AG04449 (cell line): ENCODE measurements at regions of chr12 and their contacts with region 1.

Region 1: GRCh38 chr12:94983321-94983720 is 20.2 kb downstream of the NDUFA12 start:
- DNase-seq: no peak
- H3K4me3 ChIP-seq: no peak overlapping the region
- CTCF ChIP-seq: no peak

Region 2: GRCh38 chr12:94805749-94806529 is 177.4 kb before region 1 on chr12:
- CTCF ChIA-PET with region 1: no interaction called
- POLR2A ChIA-PET with region 1: no interaction called
- DNase-seq: peak; percentile 33
- H3K4me3 ChIP-seq: no peak overlapping the region
- CTCF ChIP-seq: no peak

Region 3: GRCh38 chr12:94948232-94948810 is 35.0 kb before region 1 on chr12:
- CTCF ChIA-PET with region 1: no interaction called
- POLR2A ChIA-PET with region 1: no interaction called
- DNase-seq: no peak
- H3K4me3 ChIP-seq: no peak overlapping the region
- CTCF ChIP-seq: no peak

Region 4: GRCh38 chr12:94973221-94973620 is 10.1 kb before region 1 on chr12:
- CTCF ChIA-PET with region 1: interaction called, 3 read pairs
- POLR2A ChIA-PET with region 1: interaction called, 32 read pairs
- DNase-seq: peak; percentile 68
- H3K4me3 ChIP-seq: no peak overlapping the region; the same call in 1 of the 2 replicates
- CTCF ChIP-seq: no peak

Region 5: DNA sequence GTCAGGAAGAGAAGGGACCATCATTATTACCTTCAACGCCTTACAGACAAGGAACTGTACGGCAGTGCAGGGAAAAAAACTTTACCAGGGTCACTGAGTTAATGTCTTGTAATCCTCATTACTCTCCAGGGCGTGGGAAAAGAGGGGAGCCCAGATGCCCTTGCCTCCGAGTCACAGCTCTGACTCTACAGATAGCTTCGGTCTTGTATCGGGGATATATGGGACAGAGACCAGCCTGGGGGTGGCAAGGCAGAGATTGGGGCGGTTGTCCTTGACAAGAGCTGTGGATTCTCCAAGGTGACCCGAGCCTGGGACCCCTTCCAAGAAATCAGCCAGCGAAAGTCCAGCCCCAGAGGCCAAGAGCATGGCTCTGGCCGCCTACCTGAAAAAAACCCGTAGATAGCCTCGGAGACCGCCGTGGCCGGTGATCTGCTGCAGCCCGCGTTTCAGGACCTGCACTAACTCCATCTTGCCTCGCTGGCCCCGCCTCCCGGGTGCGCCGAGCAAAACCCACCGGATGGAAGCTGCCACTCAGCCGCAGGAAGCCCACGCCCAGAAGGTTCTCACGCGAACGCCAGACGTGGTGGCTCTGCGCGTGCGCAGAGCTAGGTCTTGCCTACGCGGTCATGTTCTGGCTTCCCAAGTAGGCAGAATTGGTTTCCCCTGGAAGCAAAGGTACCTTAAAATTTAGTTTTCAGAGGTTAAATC is 20.0 kb after region 1 on chr12 and contains the start of gene NDUFA12:
- CTCF ChIA-PET with region 1: interaction called, 3 read pairs
- POLR2A ChIA-PET with region 1: interaction called, 17 read pairs
- DNase-seq: peak; percentile 70
- H3K4me3 ChIP-seq: peak within 1 kb of the TSS; percentile 92
- CTCF ChIP-seq: peak; percentile 15

Region 6: DNA sequence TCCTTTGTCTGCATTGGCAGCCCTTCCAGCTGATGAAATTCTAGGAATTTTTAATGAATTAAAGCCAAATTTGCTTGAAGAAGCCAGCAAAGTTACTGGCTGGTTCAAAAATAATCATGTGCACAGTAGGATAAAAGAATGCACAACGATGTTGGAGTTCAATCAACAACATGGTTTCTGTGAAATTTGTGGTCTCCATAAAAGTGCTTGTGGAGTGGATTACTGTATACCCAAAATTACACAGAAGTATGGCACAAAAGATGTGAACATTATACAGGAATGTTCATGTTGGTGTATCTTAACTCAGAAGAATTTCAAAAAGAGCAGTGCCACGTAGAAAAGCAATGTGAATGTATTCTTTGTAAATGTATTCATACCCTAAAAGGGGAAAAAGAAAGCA is 385.6 kb after region 1 on chr12:
- CTCF ChIA-PET with region 1: no interaction called
- POLR2A ChIA-PET with region 1: no interaction called
- DNase-seq: no peak
- H3K4me3 ChIP-seq: no peak overlapping the region
- CTCF ChIP-seq: no peak